Gastrocnemius medialis (tissue), 4 donors: ENCODE measurements at regions of chr7 and their contacts with region 1.

Region 1: DNA sequence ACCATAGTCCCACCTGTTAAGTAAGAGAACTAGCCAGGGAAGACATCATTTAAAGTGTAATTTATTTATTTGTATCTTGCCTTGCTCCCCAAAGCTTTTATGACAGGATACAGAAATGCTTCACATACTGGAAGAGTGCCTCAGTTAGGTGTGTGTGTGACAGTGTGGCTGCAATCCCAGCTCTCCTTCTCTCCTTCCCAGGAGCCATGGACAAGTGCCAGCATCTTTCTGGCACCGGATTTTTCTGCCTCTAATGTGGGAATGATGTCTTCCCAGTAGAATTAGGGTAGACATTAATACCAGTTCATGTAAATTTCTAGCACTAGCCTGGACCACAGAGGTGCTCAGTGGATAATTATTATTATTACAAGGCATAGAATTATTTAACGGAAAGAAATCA is 30.3 kb upstream of the ATXN7L1 start:
- DNase-seq: no peak
- ATAC-seq: no peak
- H3K4me3 ChIP-seq: no peak overlapping the region
- H3K27ac ChIP-seq: no peak overlapping the region
- H3K4me1 ChIP-seq: no peaks in the 10 kb centered on the region
- H3K27me3 ChIP-seq: no peaks in the 10 kb centered on the region
- CTCF ChIP-seq: no peak
- POLR2A ChIP-seq: no peak

Region 2: DNA sequence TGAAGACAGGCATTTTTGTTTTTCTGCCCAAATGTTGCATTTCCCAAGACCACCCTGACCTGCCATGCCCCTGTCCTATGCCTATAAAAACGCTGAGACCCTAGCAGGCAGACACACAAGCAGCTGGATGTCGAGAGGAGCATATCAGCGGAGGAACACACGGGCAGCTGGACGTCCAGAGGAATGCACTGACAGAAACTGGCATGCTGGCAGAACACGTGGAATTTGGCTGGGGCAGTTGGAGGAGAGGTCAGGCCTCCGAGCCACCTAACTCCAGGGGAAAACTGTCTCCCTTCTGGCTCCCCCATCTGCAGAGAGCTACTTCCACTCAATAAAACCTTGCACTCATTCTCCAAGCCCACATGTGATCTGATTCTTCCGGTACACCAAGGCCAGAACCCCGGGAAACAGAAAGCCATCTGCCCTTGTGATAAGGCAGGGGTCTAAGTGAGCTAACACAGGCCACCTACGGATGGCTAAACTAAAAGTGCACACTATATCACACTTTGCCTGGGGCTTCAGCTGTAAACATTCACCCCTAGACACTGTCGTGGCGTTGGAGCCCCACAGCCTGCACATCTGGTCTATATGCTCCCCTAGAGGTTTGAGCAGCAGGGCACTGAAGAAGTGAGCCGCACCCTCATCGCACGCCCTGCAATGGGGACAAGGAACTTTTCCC is 46.4 kb after region 1 on chr7:
- in situ Hi-C with region 1: no loop called
- intact Hi-C with region 1: no loop called
- DNase-seq: no peak
- ATAC-seq: no peak
- H3K4me3 ChIP-seq: no peak overlapping the region
- H3K27ac ChIP-seq: no peak overlapping the region
- H3K4me1 ChIP-seq: no peaks in the 10 kb centered on the region
- H3K27me3 ChIP-seq: no peaks in the 10 kb centered on the region
- CTCF ChIP-seq: no peak
- POLR2A ChIP-seq: no peak

Region 3: GRCh38 chr7:105975770-105976422 is 69.2 kb after region 1 on chr7:
- in situ Hi-C with region 1: no loop called
- intact Hi-C with region 1: loop called (anchors 10 kb)
- DNase-seq: no peak
- ATAC-seq: no peak
- H3K4me3 ChIP-seq: no peak overlapping the region
- H3K27ac ChIP-seq: no peak overlapping the region
- H3K4me1 ChIP-seq: no peaks in the 10 kb centered on the region
- H3K27me3 ChIP-seq: no peaks in the 10 kb centered on the region
- CTCF ChIP-seq: no peak
- POLR2A ChIP-seq: no peak